Common myeloid progenitor, CD34-positive (primary cell): ENCODE measurements at regions of chr2 and their contacts with region 1.

Region 1: GRCh38 chr2:182980115-182980514 is 58.1 kb downstream of the NCKAP1 start:
- DNase-seq: peak; percentile 37 to 61 (median 60)
- H3K4me3 ChIP-seq: no peak overlapping the region
- H3K27ac ChIP-seq: no peak overlapping the region
- H3K4me1 ChIP-seq: no peaks in the 10 kb centered on the region
- H3K27me3 ChIP-seq: no peaks in the 10 kb centered on the region

Region 2: DNA sequence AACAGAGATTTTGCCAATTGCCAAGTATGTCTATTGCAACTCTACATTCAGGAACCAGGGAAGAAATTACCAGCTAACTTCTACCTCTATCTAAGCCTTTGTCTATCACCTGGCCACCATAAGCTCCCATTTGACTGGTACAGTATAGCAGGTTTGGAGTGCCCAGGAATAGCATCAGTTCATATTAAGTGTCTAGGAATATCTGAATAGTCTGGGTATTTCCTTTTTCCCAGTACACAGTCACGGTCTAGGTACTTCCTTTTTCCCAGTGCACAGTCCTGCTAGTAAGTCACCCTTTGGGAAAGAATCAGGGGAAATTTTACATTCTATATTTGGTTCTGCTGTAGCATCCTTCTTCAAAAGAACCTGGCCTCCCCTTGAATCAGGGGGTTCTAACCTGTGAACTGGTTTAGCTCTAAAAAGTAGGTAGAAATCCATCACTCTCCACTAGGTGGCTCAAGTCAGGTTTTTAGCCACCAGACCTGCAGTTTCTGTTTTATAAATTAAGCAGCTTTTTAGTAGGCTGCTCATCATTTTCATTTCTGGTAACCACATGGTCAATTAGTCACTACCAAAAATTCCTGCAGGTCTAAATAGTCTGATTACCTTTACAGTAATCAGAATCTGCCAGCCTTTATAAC is 313.3 kb before region 1 on chr2:
- CTCF ChIA-PET with region 1: interaction called, 12 read pairs
- POLR2A ChIA-PET with region 1: no interaction called
- DNase-seq: peak; percentile 42 to 71 (median 64)
- H3K4me3 ChIP-seq: no peak overlapping the region
- H3K27ac ChIP-seq: no peak overlapping the region
- H3K4me1 ChIP-seq: no peaks in the 10 kb centered on the region
- H3K27me3 ChIP-seq: no peaks in the 10 kb centered on the region

Region 3: GRCh38 chr2:182767578-182767977 is 212.5 kb before region 1 on chr2:
- CTCF ChIA-PET with region 1: interaction called, 17 read pairs
- POLR2A ChIA-PET with region 1: no interaction called
- DNase-seq: peak; percentile 18 to 28 (median 23)
- H3K4me3 ChIP-seq: no peak overlapping the region
- H3K27ac ChIP-seq: no peak overlapping the region
- H3K4me1 ChIP-seq: no peaks in the 10 kb centered on the region
- H3K27me3 ChIP-seq: no peaks in the 10 kb centered on the region

Region 4: DNA sequence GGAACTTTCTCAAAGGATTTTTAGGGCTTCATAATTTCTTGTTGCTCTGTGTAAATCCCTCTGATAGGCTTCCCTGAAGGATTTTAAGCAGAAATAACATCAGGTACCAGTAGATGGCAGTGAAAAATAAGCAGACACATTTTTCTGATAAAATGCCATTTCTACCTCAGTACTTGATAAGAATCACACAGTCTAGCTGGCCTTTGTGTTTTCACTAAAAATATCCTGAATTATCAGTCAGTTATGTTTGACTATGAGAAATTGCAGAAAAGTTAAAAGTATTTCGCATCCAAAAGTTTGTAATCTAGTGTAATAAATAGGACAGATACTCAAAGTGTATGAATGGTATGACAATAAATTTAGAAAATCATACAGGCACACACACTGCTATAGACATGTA is 195.3 kb before region 1 on chr2:
- CTCF ChIA-PET with region 1: interaction called, 10 read pairs
- POLR2A ChIA-PET with region 1: no interaction called
- DNase-seq: peak; percentile 17 to 31 (median 24)
- H3K4me3 ChIP-seq: no peak overlapping the region
- H3K27ac ChIP-seq: no peak overlapping the region
- H3K4me1 ChIP-seq: no peaks in the 10 kb centered on the region
- H3K27me3 ChIP-seq: no peaks in the 10 kb centered on the region